ENCODE measurements at regions of chr5 and their contacts with region 1.

Region 1: DNA sequence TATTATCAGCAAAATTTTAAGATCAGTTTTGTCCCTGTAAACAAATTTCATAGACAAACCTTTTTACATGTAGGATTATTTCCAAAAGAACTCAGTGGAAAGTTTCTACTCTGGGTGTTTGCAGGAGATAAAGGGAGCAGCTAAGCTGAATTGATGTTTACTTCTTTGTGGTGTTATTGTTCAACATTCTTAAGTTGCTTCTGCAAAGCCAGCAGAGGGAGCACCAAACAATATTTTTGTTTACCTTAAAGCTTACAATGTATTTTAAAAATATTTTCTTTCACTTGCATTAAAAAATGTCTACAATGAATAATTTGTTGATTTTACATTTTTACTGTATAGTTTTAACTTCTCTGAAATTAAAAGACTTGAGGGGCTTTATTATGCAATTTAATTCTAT is 135.4 kb downstream of the ATG10 start:
- DNase-seq: peak; percentile 36
- H3K4me3 Mint-ChIP-seq: no peak overlapping the region
- H3K27ac Mint-ChIP-seq: peak overlapping the region; percentile 50
- H3K4me1 Mint-ChIP-seq: peaks cover 27% of the 10 kb centered on the region
- H3K27me3 Mint-ChIP-seq: no peaks in the 10 kb centered on the region
- CTCF ChIP-seq: peak; percentile 56

Region 2: DNA sequence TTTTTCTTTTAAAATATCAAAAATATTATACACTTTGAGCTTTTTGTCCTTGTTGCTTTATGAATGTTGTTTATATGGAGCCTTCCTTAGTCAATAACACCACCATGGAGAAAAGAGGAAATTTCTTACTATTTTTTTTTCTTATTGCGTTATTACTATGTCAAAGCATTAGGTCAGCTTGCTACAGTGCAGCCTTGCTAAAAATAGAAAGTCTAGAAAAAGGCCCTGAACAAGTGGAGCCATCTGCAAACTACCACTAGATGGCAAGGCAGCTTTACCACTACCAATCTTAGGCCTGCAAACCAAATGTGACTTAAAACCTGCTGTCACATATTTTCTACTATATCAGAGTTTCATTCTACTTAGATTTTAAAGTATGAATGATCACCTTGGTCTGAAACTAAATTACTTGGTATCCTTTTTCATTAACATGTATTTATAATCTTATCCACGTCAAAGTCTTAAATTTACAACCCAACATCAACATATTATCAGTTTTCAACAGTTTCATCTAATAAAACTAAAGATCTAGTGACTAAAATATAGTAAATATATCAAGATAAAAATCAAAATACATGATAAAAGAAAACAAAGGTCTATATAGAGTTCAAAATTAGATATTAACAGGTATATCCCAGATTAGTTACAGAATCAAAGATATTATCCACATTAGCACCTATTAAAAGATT is 600.2 kb before region 1 on chr5:
- CTCF ChIA-PET with region 1: interaction called, 6 read pairs
- POLR2A ChIA-PET with region 1: no interaction called
- intact Hi-C with region 1: loop called (anchors 1 kb)
- DNase-seq: peak; percentile 79
- H3K4me3 Mint-ChIP-seq: no peak overlapping the region
- H3K27ac Mint-ChIP-seq: no peak overlapping the region
- H3K4me1 Mint-ChIP-seq: no peaks in the 10 kb centered on the region
- H3K27me3 Mint-ChIP-seq: no peaks in the 10 kb centered on the region
- CTCF ChIP-seq: peak; percentile 73

Region 3: DNA sequence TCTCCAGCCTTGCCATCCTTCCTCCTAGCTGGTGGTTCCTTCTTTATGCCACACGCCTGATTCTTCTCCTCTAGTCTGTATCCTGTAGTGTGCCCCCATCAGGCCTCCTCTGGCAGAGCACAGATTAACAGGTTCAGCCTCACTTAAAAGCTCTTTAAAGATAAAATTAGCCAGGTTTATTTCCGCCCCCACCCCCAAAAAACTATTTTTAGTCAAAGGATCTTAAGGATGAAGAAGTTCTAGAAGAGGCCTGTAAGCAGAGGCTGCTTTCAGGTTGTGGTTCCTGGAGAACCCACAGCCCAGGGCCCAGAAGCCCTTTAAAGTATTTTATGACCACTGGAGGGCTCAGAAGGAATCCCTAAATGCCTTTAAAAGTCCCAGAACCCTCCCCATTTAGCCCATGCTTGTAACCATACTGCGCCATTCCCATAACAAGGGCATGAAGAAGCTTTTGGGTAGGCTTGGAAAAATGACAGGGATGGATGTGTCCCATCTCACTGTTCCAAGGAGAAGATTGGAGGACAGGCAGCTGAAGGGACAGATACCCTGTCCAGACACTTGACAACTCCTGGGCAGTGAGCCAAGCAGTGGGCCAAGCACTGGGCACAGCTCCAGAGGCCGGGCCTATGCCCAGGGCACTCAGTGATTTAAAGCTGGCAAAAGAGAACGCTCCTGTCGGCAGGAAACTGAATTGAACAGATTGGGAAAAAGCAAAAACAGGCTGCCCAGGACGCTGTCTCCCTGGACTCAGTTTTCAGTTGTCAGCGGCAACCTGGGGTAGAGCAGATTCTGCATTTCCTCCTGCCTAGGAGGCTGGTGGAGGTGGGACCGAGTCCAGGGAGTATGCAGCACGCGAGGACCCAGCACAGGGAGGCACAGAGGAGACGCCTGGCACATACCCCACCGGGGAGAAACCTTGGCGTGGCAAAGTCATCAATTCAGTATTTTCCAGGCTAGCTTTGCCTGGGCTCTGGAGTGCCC is 250.0 kb before region 1 on chr5:
- CTCF ChIA-PET with region 1: interaction called, 22 read pairs
- POLR2A ChIA-PET with region 1: interaction called, 40 read pairs
- intact Hi-C with region 1: loop called (anchors 1 kb)
- DNase-seq: peak; percentile 93
- H3K4me3 Mint-ChIP-seq: peak overlapping the region; percentile 65
- H3K27ac Mint-ChIP-seq: peak overlapping the region; percentile 96
- H3K4me1 Mint-ChIP-seq: peaks cover 34% of the 10 kb centered on the region
- H3K27me3 Mint-ChIP-seq: no peaks in the 10 kb centered on the region
- CTCF ChIP-seq: peak; percentile 5

Region 4: DNA sequence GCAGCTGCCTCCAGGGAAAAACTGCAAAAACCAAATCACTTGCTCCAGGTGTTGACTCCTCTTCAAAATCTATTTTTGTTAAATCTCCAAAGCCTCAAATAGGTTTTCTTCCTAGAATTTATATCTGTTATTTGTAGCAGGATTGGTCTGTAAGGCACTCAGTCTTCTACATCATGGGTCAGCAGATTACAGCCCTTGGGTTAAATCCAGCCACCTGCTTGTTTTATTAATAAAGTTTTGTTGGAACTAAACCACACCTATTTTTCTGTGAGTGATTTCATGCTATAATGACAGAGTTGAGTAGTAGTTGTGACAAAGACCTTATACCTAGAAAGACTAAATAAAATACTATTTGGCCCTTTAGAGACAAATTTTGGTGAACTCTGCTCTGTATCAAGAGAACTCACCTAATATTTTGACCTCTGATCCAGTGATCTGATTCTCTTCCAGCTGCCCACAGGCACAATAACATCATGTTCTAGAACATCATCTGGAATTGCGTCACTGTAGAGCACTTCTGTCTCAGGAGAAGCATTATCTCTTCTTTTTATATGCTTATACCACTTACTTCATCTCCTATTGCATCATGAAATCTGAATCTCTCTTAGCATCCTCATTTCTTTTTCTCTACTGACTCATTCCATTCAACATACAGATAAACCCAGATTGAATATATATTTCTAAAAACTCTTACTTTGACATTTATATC is 40.8 kb after region 1 on chr5:
- CTCF ChIA-PET with region 1: interaction called, 38 read pairs
- POLR2A ChIA-PET with region 1: interaction called, 55 read pairs
- intact Hi-C with region 1: no loop called
- DNase-seq: peak; percentile 84
- H3K4me3 Mint-ChIP-seq: peak overlapping the region; percentile 4
- H3K27ac Mint-ChIP-seq: peak overlapping the region; percentile 93
- H3K4me1 Mint-ChIP-seq: peaks cover 47% of the 10 kb centered on the region
- H3K27me3 Mint-ChIP-seq: no peaks in the 10 kb centered on the region
- CTCF ChIP-seq: no peak

Region 5: GRCh38 chr5:82225525-82226172 is 118.4 kb after region 1 on chr5:
- CTCF ChIA-PET with region 1: interaction called, 16 read pairs
- POLR2A ChIA-PET with region 1: interaction called, 3 read pairs
- intact Hi-C with region 1: loop called (anchors 1 kb)
- DNase-seq: peak; percentile 75
- H3K4me3 Mint-ChIP-seq: no peak overlapping the region
- H3K27ac Mint-ChIP-seq: no peak overlapping the region
- H3K4me1 Mint-ChIP-seq: peaks cover 12% of the 10 kb centered on the region
- H3K27me3 Mint-ChIP-seq: no peaks in the 10 kb centered on the region
- CTCF ChIP-seq: peak; percentile 85

Region 6: GRCh38 chr5:82295144-82295543 is 187.9 kb after region 1 on chr5:
- CTCF ChIA-PET with region 1: no interaction called
- POLR2A ChIA-PET with region 1: no interaction called
- intact Hi-C with region 1: no loop called
- DNase-seq: no peak
- H3K4me3 Mint-ChIP-seq: no peak overlapping the region
- H3K27ac Mint-ChIP-seq: no peak overlapping the region
- H3K4me1 Mint-ChIP-seq: no peaks in the 10 kb centered on the region
- H3K27me3 Mint-ChIP-seq: no peaks in the 10 kb centered on the region
- CTCF ChIP-seq: no peak